ENCODE measurements at regions of chr15 and their contacts with region 1.

Region 1: GRCh38 chr15:71743861-71744382 is 66.4 kb upstream of the NR2E3 start:
- DNase-seq: no peak
- H3K4me3 ChIP-seq: no peak overlapping the region
- H3K27ac ChIP-seq: no peak overlapping the region
- H3K4me1 ChIP-seq: peaks cover 4% of the 10 kb centered on the region
- H3K27me3 ChIP-seq: no peaks in the 10 kb centered on the region
- CTCF ChIP-seq: peak; percentile 83

Region 2: DNA sequence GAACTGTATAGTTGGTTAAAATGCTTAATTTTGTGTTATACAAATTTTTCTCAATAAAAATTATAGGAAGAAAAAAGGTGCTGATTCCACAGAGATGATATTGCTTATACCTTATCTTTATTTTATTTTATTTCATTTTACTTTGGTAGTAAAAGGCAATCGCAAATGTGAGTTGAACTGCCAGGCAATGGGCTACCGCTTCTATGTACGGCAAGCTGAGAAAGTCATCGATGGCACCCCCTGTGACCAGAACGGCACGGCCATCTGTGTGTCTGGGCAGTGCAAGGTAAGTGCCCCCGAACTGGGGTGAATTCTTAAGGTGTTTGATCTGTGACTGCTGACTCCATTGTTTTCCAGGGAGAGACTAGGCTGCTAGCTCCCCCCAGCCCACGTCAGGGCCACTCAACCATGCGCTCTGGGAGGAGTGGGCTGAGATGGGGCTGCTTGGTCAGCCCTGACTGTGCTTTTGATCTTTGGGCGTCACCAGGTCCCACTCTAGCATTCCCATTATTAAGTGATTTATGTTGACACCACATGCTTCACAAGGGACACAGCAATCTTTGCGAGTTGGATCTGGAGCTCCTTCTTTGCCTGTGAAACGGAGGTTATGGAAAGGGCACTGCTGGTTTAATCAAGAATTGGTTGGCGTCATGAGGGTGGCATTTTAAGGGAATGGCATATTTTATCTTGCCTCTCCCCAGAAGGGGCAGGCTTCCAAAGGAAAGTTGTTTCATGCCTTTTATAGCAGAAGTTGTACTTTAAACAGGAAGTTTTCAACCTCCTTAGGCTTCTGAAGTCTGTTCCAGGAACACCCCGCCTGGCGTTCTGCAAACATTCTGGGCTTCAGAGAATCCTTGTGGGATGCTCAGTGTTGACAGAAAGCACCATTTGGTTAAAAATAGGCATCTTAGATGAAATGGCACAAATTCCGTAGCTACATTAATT is 332.1 kb before region 1 on chr15:
- intact Hi-C with region 1: no loop called
- DNase-seq: no peak
- H3K4me3 ChIP-seq: peak overlapping the region; percentile 10
- H3K27ac ChIP-seq: peak overlapping the region; percentile 77
- H3K4me1 ChIP-seq: peaks cover 49% of the 10 kb centered on the region
- H3K27me3 ChIP-seq: no peaks in the 10 kb centered on the region
- CTCF ChIP-seq: peak; percentile 31

Region 3: GRCh38 chr15:71532994-71533393 is 210.9 kb before region 1 on chr15:
- intact Hi-C with region 1: no loop called
- DNase-seq: no peak
- H3K4me3 ChIP-seq: no peak overlapping the region
- H3K27ac ChIP-seq: no peak overlapping the region
- H3K4me1 ChIP-seq: peaks cover 18% of the 10 kb centered on the region
- H3K27me3 ChIP-seq: no peaks in the 10 kb centered on the region
- CTCF ChIP-seq: peak; percentile 70

Region 4: DNA sequence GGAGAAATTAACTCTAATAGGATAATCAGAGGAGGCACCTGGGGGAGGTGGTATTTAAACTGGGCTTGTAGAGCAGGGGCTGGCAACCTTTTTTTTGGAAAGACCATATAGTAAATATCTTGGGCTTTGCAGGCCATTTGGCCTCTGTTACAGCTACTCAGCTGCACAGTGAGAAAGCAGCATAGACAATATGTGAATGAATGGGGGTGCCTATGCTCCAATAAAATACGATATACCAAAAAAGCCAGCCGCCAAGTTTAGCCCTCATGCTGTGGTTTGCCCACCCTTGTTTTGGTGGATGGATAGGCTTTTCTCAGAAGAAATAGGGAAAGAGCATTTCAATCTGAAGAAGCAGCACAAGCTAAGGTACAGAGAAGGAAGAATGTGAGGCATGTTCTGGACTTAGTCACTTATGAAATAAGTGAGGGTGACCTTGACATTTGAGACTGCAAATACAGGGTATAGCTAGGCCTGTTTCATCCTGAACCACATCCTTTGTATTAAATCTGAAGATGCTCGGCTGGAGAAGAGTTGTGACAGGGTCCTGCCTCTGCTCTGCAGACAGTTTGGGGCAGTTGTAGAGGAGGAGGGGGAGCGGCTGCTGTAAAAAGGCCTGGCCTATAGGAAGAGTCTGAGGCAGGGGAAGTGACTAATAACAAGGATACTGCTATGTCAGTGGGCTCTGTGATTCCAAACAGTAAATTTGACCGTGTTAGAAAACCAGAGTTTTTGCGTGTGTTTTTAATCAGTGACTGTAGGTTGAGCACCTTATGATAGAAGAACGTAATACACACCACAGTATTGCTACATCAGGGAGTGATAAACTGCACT is 64.5 kb before region 1 on chr15:
- intact Hi-C with region 1: no loop called
- DNase-seq: no peak
- H3K4me3 ChIP-seq: no peak overlapping the region
- H3K27ac ChIP-seq: peak overlapping the region; percentile 81
- H3K4me1 ChIP-seq: peaks cover 55% of the 10 kb centered on the region
- H3K27me3 ChIP-seq: no peaks in the 10 kb centered on the region
- CTCF ChIP-seq: no peak

Region 5: DNA sequence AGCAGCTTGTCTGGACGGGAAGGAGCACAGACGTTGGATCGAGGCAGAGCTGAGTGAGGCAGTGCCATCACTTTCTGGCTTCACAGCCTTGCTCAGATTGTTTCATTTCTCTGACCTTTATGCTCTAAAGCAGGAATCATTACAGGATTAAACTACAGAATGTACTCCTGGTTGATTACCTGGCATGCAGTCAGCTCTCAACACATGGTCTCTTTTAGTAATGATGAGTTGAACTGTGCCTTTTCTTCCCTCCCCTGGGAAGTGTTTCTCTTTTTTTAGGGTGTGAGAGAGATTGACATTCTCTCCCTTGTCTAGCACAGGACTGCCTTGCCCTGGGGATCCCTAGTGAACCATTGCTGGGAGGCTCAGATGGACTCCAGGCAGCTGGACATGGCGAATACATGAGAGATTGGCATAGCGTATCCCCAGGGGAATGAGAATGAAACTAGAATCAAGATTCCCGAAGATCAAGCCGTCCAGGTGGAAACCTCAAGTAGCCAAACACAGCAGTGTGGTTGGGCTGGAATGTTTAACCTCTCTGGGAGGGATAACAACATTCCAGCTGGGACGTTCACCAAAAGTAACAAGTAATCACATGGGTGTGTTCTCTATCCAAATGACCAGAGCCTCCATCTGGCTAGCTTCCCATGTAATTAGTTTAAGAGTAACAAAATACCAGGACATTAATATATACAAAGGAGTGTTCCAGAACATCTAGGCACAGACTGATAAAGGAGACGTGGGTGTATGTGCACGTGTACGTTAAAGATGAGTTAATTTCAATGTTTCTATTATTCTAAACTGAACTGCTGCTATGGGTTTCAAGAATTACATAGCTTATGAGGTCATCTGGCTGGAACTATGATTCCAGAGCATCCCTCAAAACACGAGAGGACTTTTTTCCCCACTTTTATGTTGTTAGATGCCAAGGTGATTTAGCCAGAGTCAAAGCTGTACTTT is 52.2 kb before region 1 on chr15:
- intact Hi-C with region 1: no loop called
- DNase-seq: no peak
- H3K4me3 ChIP-seq: peak overlapping the region; percentile 47
- H3K27ac ChIP-seq: peak overlapping the region; percentile 89
- H3K4me1 ChIP-seq: peaks cover 45% of the 10 kb centered on the region
- H3K27me3 ChIP-seq: no peaks in the 10 kb centered on the region
- CTCF ChIP-seq: no peak

Region 6: DNA sequence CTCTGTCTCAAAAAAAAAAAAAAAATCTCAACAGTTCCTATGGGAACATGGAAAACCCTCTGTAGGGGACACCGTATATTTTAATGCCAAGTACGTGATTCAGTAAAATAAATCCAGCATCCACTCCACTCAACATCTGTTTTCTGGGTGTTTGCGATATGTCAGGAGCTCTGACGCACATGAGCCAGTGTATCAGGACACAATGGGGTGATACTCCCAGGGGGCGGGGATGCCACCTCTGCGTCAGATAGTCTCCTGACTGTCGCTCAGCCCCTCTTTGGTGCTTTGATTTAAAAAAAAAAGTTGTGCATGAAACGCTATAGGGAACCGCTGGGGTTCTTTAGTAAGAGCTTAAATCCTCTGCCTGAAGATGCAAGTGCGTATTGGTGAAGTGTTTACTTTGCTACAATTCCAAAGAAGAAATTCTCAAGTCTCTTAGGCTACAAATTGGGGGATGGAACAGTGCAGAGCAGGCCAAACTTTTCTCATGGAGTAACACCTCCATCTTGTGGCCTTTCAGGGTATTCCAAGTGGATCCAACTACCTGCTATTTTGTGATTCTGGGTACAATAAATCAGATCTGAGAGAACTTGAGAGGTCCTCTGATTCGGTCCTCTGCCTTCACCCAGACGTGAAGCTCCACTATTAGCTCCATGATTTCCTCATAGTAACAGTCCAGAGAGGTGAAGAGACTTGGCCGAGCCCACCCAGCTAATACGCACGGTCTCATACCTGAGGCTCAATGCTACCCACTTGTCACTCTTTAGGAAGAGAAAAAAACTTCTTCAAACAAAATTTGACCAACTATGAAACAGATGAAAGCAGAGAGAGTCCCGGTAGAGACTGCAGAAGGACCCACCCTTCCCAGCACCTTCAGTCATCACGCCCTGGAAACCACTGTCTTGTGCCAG is 57.2 kb after region 1 on chr15:
- intact Hi-C with region 1: loop called (anchors 2 kb)
- DNase-seq: no peak
- H3K4me3 ChIP-seq: no peak overlapping the region
- H3K27ac ChIP-seq: no peak overlapping the region
- H3K4me1 ChIP-seq: peaks cover 17% of the 10 kb centered on the region
- H3K27me3 ChIP-seq: no peaks in the 10 kb centered on the region
- CTCF ChIP-seq: peak; percentile 89

Region 7: DNA sequence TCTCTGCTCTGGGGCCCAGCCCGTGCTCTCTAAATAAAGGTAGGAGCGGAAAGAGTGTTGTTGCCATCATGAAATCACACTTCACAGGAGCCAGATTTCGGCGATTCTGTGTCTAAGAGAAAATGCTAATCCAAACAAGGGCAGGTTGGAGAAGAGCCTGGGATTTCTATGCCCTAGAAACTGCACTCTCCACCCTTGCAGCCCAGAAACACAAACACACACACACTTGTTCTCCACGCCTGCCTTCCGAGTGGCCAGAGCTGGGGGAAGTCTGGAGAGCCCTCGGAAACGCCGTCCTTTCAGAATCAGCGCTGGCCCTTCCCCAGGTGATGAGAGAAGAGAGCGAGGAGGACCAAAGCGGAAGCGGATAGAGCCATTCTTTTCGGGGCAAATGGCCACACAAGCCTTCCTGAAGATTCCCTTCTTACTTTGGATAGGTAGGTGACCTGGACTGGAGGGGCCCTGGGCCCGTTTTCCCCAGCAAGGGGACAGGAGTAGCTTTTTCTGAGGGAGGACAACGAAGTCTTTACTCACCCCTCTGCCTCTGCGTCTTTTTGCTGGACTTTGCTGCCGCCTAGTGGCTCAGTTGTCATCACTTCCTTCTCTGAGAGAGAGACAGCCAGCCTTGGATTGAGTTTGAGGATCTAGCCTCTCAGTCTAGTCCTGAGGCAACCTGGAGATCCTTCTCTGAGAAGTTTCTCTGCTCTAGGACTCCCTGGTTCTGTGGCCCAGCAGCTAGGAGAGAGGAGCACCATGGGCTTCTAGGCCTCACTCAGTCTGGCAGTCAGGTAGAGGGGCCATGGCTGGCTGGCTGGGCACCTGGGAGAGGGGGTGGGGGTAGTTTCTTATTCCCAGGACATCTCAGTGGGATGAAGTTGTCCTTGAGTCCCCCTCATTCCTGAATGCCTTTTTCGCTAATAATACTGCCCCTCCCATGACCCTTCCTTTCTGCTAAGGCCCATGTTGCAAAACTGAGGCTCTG is 412.0 kb after region 1 on chr15:
- intact Hi-C with region 1: loop called (anchors 10 kb)
- DNase-seq: peak; percentile 83
- H3K4me3 ChIP-seq: peak overlapping the region; percentile 69
- H3K27ac ChIP-seq: peak overlapping the region; percentile 69
- H3K4me1 ChIP-seq: peaks cover 12% of the 10 kb centered on the region
- H3K27me3 ChIP-seq: no peaks in the 10 kb centered on the region
- CTCF ChIP-seq: peak; percentile 85